GM12878 (cell line): ENCODE measurements at regions of chr6 and their contacts with region 1.

Region 1: DNA sequence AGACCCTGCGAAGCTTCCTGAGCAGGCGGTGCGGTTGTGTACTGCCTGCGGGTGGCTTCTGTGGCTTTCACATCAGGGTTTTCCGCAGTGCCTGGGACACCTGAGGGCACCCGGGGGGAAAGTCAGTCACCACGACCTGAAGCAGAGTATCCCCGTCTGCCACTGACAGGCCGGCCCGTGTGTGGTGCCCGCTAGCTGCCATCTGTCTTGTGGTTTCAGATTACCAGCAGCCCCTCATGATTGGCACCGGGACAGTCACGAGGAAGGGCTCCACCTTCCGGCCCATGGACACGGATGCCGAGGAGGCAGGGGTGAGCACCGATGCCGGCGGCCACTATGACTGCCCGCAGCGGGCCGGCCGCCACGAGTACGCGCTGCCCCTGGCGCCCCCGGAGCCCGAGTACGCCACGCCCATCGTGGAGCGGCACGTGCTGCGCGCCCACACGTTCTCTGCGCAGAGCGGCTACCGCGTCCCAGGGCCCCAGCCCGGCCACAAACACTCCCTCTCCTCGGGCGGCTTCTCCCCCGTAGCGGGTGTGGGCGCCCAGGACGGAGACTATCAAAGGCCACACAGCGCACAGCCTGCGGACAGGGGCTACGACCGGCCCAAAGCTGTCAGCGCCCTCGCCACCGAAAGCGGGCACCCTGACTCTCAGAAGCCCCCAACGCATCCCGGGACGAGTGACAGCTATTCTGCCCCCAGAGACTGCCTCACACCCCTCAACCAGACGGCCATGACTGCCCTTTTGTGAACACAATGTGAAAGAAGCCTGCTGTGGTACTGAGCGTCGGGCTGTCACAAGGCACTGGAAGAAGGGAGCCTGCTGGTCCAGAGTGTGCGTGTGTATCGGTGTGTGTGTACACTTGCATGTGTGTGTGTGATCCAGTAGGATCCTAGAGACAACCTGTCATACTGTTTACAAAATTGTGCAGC is 54.4 kb downstream of the GOPC start:
- DNase-seq: no peak
- ATAC-seq: peak; percentile 65
- H3K4me3 ChIP-seq: no peak overlapping the region
- H3K27ac ChIP-seq: no peak overlapping the region
- H3K4me1 ChIP-seq: peaks cover 16% of the 10 kb centered on the region
- H3K27me3 ChIP-seq: no peaks in the 10 kb centered on the region
- CTCF ChIP-seq: no peak
- EP300 ChIP-seq: no peak
- POLR2A ChIP-seq: no peak
- RAD21 ChIP-seq: no peak

Region 2: DNA sequence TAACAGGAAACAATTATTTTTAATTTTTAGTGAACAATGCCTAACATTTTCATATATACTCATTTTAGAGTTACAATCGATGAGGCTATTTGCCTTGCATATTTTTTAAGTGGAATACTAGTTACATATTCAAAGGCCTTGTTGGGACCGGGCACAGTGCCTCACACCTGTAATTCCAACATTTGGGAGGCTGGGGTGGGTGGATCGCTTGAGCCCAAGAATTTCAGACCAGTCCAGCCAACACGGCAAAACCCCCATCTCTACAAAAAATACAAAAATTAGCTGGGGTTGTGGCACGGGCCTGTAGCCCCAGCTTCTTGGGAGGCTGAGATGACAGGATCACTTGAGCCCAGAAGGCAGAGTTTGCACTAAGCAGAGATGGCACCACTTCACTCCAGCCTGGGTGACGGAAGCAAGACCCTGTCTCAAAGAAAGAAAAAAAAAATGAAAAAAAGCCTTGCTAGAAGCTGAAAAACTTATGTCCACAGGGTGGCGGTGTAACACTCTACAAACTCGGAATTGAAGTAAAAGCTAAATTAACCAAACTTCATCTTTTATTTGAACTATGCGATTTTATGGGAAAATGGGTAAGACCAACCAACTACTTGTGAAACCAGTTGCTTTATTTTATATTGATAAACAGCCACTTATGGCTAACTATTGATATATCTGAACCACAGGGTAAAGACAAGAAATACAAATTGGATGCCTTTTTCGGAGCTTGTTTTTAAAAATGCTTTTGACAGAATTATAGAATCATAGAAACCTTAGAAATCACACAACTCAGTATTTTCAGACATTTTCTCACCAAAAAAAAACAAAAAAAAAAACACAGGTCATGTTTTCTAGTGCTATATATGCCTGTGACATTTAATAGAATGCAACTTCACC is 98.2 kb before region 1 on chr6:
- CTCF ChIA-PET with region 1: interaction called, 119 read pairs
- POLR2A ChIA-PET with region 1: no interaction called
- RAD21 ChIA-PET with region 1: interaction called, 12 read pairs
- SMC1A ChIA-PET with region 1: interaction called, 51 read pairs
- in situ Hi-C with region 1: loop called (anchors 5 kb)
- intact Hi-C with region 1: no loop called
- DNase-seq: peak; percentile 12
- ATAC-seq: peak; percentile 62
- H3K4me3 ChIP-seq: no peak overlapping the region
- H3K27ac ChIP-seq: no peak overlapping the region
- H3K4me1 ChIP-seq: no peaks in the 10 kb centered on the region
- H3K27me3 ChIP-seq: no peaks in the 10 kb centered on the region
- CTCF ChIP-seq: peak; percentile 59 to 68 (median 59); a peak in 5 of 6 replicates
- EP300 ChIP-seq: no peak
- POLR2A ChIP-seq: no peak
- RAD21 ChIP-seq: peak; percentile 86

Region 3: GRCh38 chr6:117613920-117614560 is 66.1 kb after region 1 on chr6:
- CTCF ChIA-PET with region 1: no interaction called
- POLR2A ChIA-PET with region 1: no interaction called
- RAD21 ChIA-PET with region 1: no interaction called
- SMC1A ChIA-PET with region 1: no interaction called
- in situ Hi-C with region 1: no loop called
- intact Hi-C with region 1: no loop called
- DNase-seq: no peak
- ATAC-seq: peak; percentile 45
- H3K4me3 ChIP-seq: no peak overlapping the region
- H3K27ac ChIP-seq: no peak overlapping the region
- H3K4me1 ChIP-seq: 0 out of 2 replicates have a peak, but pooled peaks cover 3% of the 10 kb centered on the region
- H3K27me3 ChIP-seq: no peaks in the 10 kb centered on the region
- CTCF ChIP-seq: no peak
- EP300 ChIP-seq: no peak
- POLR2A ChIP-seq: no peak
- RAD21 ChIP-seq: no peak